Activated CD8-positive, alpha-beta T cell treated with anti-CD3 and anti-CD28 coated beads, Interleukin-2, amount 10 ng/mL, durations not matched to agents 7 days and 5 days (primary cell): ENCODE measurements at regions of chr3 and their contacts with region 1.

Region 1: GRCh38 chr3:46297658-46298463 is 55.6 kb downstream of the CCR3 start:
- DNase-seq: no peak
- ATAC-seq: no peak
- H3K4me3 Mint-ChIP-seq: no peak overlapping the region
- H3K27ac Mint-ChIP-seq: peak overlapping the region; percentile 92
- H3K4me1 Mint-ChIP-seq: peaks cover 93% of the 10 kb centered on the region
- H3K27me3 Mint-ChIP-seq: no peaks in the 10 kb centered on the region

Region 2: DNA sequence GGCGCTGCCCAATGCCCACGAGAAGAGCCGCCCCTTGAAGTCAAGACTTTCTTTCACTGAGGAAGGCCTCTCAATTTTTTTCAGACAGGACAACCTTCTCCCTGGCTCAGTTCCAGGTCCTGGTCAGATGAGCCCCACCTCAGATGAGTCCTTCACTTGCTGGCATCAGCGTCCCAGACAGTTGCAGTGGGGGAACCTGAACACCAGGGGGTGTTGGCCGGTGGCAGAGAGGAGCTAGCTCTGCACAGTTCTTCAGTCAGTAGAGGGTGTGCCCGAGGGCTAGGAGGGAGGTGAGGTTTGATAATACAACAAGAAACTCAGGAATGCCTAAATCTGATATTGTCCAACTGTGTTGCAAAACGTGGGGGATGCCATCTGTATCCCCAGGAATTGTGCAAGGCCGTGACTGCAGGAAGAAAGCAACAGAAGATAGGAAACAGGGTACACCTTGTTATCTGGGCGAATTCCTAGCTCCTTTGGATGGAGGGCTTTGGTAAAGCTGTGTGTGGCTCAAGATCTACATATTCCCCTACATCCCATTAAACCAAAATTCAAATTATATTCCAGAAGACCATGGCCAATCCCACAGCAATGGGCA is 21.3 kb before region 1 on chr3:
- CTCF ChIA-PET with region 1: interaction called, 28 read pairs
- POLR2A ChIA-PET with region 1: interaction called, 4 read pairs
- DNase-seq: peak; percentile 89
- ATAC-seq: peak; percentile 83
- H3K4me3 Mint-ChIP-seq: no peak overlapping the region
- H3K27ac Mint-ChIP-seq: peak overlapping the region; percentile 85
- H3K4me1 Mint-ChIP-seq: peaks cover 64% of the 10 kb centered on the region
- H3K27me3 Mint-ChIP-seq: peaks cover 3% of the 10 kb centered on the region

Region 3: DNA sequence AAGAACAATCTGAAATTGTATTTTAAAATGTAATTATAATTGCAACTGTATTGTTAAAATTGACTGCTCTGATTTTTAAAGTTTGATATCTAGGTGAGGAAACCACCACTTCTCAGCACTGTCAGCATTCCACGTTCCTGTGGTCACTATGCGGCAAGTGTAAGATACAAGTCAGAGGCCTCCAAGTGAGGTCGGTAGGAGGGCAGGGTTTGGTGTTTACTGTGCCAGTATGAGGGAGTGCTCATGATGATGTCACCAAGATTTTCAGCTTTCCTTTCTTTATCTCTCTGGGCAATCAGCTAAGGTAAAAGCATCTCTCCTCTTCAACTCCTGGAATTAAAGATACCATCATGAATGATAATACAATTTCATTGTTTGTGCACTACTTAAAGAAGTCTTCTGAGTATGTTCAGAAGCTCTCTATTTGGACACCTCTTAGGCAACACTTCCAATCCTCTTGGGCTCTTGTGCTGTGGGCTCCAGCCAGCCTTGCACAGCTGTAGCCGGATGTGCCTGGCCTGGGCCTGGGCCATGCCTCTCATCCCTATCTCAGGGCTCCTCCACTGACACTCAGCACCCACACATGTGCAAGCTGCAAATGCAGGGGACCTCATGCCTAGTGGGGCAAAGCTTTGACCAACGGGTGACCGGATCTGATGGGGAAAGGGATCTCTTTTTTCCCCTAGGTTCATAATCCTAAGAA is 12.7 kb before region 1 on chr3:
- CTCF ChIA-PET with region 1: interaction called, 21 read pairs
- POLR2A ChIA-PET with region 1: interaction called, 6 read pairs
- DNase-seq: peak; percentile 72
- ATAC-seq: peak; percentile 74
- H3K4me3 Mint-ChIP-seq: peak overlapping the region; percentile 26
- H3K27ac Mint-ChIP-seq: peak overlapping the region; percentile 82
- H3K4me1 Mint-ChIP-seq: peaks cover 84% of the 10 kb centered on the region
- H3K27me3 Mint-ChIP-seq: no peaks in the 10 kb centered on the region

Region 4: DNA sequence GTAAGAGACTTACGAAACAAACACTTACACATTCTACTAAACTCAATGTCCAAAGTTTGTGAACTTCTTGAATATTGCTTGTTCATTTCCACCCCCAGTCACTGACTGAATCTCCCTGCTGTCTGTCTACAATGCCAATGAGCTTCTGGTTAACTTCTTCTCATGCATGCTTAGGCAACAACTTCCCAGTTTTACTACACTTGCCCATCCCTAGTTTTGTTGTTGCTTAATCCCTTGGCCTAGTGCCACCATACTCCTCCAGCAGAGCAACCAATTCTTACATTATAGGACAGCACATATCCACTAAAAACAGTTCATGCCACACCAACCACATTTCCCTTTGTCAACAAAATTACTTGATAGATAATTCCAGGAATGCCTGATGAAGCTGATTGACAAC is 15.1 kb after region 1 on chr3:
- CTCF ChIA-PET with region 1: interaction called, 12 read pairs
- POLR2A ChIA-PET with region 1: interaction called, 3 read pairs
- DNase-seq: no peak
- ATAC-seq: no peak
- H3K4me3 Mint-ChIP-seq: no peak overlapping the region
- H3K27ac Mint-ChIP-seq: no peak overlapping the region
- H3K4me1 Mint-ChIP-seq: peaks cover 24% of the 10 kb centered on the region
- H3K27me3 Mint-ChIP-seq: peaks cover 4% of the 10 kb centered on the region

Region 5: DNA sequence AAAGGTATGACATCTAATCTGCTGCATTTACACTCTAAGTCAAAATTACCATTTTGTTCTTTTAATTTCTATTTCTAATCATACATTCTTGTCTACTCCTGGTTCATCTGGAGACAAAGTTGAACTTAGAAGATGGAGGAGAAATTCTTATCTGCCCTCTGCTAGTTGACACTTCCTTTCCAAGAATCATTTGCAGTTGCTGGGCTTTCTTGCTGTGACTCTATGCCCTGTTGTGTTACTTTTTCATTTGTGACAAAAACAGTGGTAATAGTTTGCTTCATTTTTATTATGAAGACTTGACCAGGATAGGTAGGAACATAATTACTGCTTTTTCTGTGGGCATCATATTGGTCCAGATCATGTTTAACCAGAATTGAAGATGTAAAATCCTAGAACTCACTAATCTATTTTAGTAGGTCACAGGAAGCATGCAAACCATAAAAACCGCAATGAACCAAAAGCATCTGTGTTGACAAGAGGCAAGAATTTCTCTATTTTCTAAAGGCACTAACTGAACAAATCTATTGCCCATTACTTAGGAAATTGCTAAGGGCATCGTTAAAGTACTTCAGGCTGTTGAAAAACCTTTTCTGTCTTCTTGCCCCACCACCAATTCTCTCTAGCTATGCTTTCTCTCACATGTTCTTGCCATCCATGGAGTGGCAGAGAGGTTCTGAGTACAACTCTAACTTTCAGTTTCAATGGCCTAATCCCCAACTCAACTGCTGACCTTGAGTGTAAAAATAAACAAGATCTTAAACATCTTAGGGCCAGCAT is 51.8 kb after region 1 on chr3:
- CTCF ChIA-PET with region 1: interaction called, 25 read pairs
- POLR2A ChIA-PET with region 1: interaction called, 10 read pairs
- DNase-seq: peak; percentile 68
- ATAC-seq: peak; percentile 54
- H3K4me3 Mint-ChIP-seq: peak overlapping the region; percentile 59
- H3K27ac Mint-ChIP-seq: peak overlapping the region; percentile 91
- H3K4me1 Mint-ChIP-seq: peaks cover 80% of the 10 kb centered on the region
- H3K27me3 Mint-ChIP-seq: no peaks in the 10 kb centered on the region

Region 6: DNA sequence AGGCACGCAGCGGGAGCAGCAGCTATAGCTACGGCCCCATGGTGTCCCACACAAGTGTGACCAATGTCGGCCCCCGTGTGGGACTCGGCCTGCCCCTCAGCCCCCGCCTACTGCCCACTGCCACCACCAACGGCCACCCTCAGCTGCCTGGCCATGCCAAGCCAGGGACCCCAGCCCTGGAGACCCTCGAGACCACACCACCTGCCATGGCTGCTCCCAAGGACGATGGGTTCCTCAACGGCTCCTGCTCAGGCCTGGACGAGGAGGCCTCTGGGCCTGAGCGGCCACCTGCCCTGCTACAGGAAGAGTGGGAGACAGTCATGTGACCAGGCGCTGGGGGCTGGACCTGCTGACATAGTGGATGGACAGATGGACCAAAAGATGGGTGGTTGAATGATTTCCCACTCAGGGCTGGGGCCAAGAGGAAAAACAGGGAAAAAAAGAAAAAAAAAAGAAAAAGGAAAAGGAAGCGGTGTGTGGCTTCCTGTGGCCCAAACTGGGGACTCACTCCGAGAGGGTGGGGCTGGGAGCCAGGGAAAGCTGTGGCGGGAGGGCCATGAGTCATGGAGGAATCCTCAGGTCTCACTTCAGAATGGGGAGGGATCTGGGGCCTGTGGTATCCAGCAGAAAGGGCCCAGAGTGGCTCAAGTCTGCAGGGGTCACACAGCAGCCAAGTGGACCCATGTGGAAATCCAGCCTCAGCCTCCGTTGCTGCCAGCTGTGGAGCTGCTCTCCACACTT is 605.6 kb after region 1 on chr3:
- CTCF ChIA-PET with region 1: no interaction called
- POLR2A ChIA-PET with region 1: no interaction called
- DNase-seq: no peak
- ATAC-seq: no peak
- H3K4me3 Mint-ChIP-seq: no peak overlapping the region
- H3K27ac Mint-ChIP-seq: no peak overlapping the region
- H3K4me1 Mint-ChIP-seq: no peaks in the 10 kb centered on the region
- H3K27me3 Mint-ChIP-seq: peaks cover 6% of the 10 kb centered on the region